Activated CD4-positive, alpha-beta T cell treated with anti-CD3 and anti-CD28 coated beads for 36 hours (primary cell): ENCODE measurements at regions of chr5 and their contacts with region 1.

Region 1: DNA sequence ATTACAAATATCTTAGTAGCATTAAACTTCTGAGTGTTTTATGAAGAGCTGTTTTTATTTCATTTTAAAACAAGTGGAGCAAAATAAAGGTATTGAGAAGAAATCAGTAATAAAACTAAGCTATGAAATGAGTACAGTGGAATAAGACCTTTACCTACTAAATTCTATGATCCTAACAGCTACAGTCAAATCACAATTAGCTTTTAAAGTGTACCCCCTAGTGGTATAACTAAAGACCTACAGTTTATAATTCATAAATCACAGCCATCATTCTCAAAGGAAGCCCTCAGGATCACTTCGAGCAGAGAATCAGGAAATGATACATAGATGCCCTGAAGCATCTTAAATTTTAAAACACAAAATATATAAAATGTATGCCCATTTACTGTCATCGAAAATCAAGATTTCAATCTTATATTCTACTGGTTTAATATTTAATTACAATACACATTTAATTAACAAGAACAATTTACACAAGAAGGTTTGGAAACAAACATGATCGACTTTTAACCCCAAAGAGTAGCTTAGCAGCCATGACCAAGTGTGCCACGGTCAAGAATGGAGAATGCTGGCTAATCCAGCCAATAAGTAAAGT is 12.3 kb downstream of the CCNH start:
- DNase-seq: no peak
- ATAC-seq: peak; percentile 77
- H3K4me3 Mint-ChIP-seq: no peak overlapping the region
- H3K27ac Mint-ChIP-seq: no peak overlapping the region
- H3K4me1 Mint-ChIP-seq: peaks cover 30% of the 10 kb centered on the region
- H3K27me3 Mint-ChIP-seq: no peaks in the 10 kb centered on the region

Region 2: DNA sequence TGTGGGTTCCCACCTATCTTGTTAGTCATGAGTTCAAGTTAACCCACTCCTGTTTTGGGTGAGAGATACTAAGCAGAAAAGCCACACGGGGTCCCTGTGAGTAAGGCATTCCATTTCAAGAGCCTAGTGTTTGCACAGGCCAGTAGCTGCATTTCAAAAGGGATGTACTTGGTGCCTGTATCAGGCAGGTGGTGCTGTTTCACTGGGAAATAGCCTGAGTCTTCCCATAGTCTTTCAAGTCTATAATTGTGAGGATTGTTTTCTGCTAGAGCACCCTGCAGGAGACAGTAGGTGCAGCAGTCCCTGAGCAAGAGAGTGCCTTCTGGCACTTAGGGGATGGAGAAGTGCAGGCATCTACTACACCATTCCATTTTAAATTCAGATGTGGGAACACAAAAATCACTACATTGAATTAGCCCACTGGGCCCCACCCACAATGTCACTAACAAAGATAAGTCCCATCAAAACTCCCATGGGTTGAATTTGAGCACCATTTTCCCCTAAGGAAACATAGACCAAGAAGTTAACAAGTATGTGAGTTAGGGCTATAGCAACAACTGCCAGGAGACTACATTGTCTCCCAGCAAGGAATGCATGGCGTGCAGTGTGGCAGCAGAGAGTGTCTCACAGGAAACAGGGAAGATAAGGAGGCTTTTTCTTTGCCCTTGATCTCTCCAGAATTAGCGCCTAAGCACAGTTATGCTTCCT is 519.5 kb before region 1 on chr5:
- CTCF ChIA-PET with region 1: no interaction called
- POLR2A ChIA-PET with region 1: no interaction called
- intact Hi-C with region 1: loop called (anchors 1 to 2 kb)
- DNase-seq: peak; percentile 55
- ATAC-seq: peak; percentile 97
- H3K4me3 Mint-ChIP-seq: no peak overlapping the region
- H3K27ac Mint-ChIP-seq: no peak overlapping the region
- H3K4me1 Mint-ChIP-seq: no peaks in the 10 kb centered on the region
- H3K27me3 Mint-ChIP-seq: peaks cover 5% of the 10 kb centered on the region

Region 3: DNA sequence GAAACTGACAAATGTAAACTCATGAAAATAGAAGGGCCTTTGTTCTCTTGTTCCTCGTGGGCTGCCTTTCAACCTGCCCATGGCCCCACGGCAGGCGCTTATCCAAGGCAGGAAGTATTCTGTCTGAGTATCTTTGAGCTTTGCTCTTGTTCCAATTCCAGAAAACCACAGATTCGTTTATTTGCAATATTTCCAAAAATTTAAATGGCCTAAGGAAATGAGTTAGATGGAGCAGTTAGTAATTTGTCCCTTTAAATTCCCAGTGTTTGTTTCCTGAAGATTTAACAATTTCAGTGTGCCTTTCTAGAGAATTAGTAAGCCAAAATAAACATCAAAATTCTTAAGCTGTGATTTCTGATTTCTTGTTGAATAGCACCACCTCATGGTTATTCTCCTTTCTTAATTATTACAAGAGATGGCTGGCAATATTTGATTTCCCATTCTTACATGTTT is 432.1 kb before region 1 on chr5:
- CTCF ChIA-PET with region 1: interaction called, 3 read pairs
- POLR2A ChIA-PET with region 1: no interaction called
- intact Hi-C with region 1: loop called in 1 of 2 experiments (anchors 2 kb)
- DNase-seq: no peak
- ATAC-seq: no peak
- H3K4me3 Mint-ChIP-seq: no peak overlapping the region
- H3K27ac Mint-ChIP-seq: no peak overlapping the region
- H3K4me1 Mint-ChIP-seq: peaks cover 2% of the 10 kb centered on the region
- H3K27me3 Mint-ChIP-seq: peaks cover 10% of the 10 kb centered on the region

Region 4: GRCh38 chr5:86986837-86987236 is 413.6 kb before region 1 on chr5:
- CTCF ChIA-PET with region 1: interaction called, 4 read pairs
- POLR2A ChIA-PET with region 1: no interaction called
- intact Hi-C with region 1: loop called in 1 of 2 experiments (anchors 2 kb)
- DNase-seq: no peak
- ATAC-seq: no peak
- H3K4me3 Mint-ChIP-seq: no peak overlapping the region
- H3K27ac Mint-ChIP-seq: no peak overlapping the region
- H3K4me1 Mint-ChIP-seq: no peaks in the 10 kb centered on the region
- H3K27me3 Mint-ChIP-seq: peaks cover 4% of the 10 kb centered on the region

Region 5: GRCh38 chr5:87053146-87053545 is 347.3 kb before region 1 on chr5:
- CTCF ChIA-PET with region 1: no interaction called
- POLR2A ChIA-PET with region 1: no interaction called
- intact Hi-C with region 1: no loop called
- DNase-seq: no peak
- ATAC-seq: no peak
- H3K4me3 Mint-ChIP-seq: no peak overlapping the region
- H3K27ac Mint-ChIP-seq: no peak overlapping the region
- H3K4me1 Mint-ChIP-seq: no peaks in the 10 kb centered on the region
- H3K27me3 Mint-ChIP-seq: no peaks in the 10 kb centered on the region

Region 6: GRCh38 chr5:87383216-87383615 is 17.2 kb before region 1 on chr5:
- CTCF ChIA-PET with region 1: interaction called, 17 read pairs
- POLR2A ChIA-PET with region 1: no interaction called
- intact Hi-C with region 1: loop called in 1 of 2 experiments (anchors 2 kb)
- DNase-seq: no peak
- ATAC-seq: no peak
- H3K4me3 Mint-ChIP-seq: no peak overlapping the region
- H3K27ac Mint-ChIP-seq: no peak overlapping the region
- H3K4me1 Mint-ChIP-seq: no peaks in the 10 kb centered on the region
- H3K27me3 Mint-ChIP-seq: no peaks in the 10 kb centered on the region